ENCODE measurements at regions of chr6 and their contacts with region 1.

Region 1: GRCh38 chr6:155327326-155328073 is 13.2 kb upstream of the TFB1M start:
- DNase-seq: peak in 4 of 10 donors; percentile 24 to 50 (median 42)
- H3K4me3 ChIP-seq: no peak overlapping the region
- H3K27ac ChIP-seq: no peak overlapping the region
- H3K27me3 ChIP-seq: no peaks in the 10 kb centered on the region
- CTCF ChIP-seq: peak; percentile 72 to 97 (median 90)

Region 2: DNA sequence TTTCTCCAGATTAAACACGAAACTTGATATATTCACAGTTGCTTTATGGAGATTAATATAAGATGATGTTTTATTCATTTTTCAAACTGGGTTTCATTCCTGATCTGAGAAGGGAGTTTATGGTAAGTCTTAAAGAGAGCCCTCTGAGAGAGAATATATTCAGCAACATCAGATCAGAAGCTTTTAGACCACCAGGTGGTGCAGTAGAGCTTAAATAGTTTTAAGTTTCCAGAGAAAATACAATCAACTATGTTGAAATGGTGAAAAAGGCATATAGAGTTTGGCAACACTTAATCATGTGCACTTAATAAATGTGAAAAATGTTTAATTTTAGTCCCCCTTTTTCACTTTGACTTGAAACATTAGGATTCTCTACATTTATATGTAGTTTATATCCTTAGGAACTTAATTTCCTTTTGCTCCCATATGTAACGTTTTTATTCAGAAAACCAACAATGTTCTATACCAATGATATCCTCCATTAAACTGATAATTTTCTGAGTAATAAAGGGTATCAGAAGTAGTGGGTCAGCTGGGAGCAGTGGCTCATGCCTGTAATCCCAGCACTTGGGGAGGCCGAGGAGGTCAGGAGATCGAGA is 150.0 kb before region 1 on chr6:
- intact Hi-C with region 1: no loop called
- DNase-seq: peak in 1 of 10 donors; percentile 48
- H3K4me3 ChIP-seq: no peak overlapping the region
- H3K27ac ChIP-seq: no peak overlapping the region
- H3K27me3 ChIP-seq: no peaks in the 10 kb centered on the region
- CTCF ChIP-seq: peak; percentile 63 to 95 (median 82)

Region 3: DNA sequence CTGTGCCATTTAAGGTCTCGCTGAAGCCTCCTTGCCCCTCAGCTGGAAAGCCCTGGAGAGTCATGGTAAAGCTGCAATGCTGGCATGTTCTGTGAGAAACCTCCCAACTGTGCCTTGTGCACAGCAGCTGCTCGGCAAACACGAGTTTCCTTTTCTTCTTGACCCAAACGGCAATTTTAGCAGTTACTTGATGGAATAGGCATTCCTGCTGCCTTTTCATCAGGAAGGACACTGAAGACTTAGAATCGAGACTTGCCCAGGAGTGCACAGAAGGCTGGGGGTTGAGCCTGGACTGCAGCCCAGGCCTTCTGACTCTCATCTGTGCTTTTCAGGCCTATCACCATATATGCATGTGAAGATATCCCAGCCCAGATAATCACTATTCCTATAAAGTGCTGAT is 92.4 kb before region 1 on chr6:
- intact Hi-C with region 1: no loop called
- DNase-seq: no peak
- H3K4me3 ChIP-seq: no peak overlapping the region
- H3K27ac ChIP-seq: peak overlapping the region in 22 of 59 donors; percentile 9 to 67 (median 35)
- H3K27me3 ChIP-seq: no peaks in the 10 kb centered on the region
- CTCF ChIP-seq: no peak

Region 4: GRCh38 chr6:155493694-155494143 is 166.2 kb after region 1 on chr6:
- intact Hi-C with region 1: loop called in 1 of 2 experiments (anchors 10 kb)
- DNase-seq: peak in 2 of 10 donors; percentile 17 to 30
- H3K4me3 ChIP-seq: no peak overlapping the region
- H3K27ac ChIP-seq: no peak overlapping the region
- H3K27me3 ChIP-seq: no peaks in the 10 kb centered on the region
- CTCF ChIP-seq: no peak

Region 5: GRCh38 chr6:155530219-155530834 is 202.8 kb after region 1 on chr6:
- intact Hi-C with region 1: loop called (anchors 2 to 5 kb)
- DNase-seq: no peak
- H3K4me3 ChIP-seq: no peak overlapping the region
- H3K27ac ChIP-seq: no peak overlapping the region
- H3K27me3 ChIP-seq: peaks cover 0 to 2% (median 0%) of the 10 kb centered on the region in 45 donors
- CTCF ChIP-seq: peak; percentile 29 to 76 (median 58)

Region 6: DNA sequence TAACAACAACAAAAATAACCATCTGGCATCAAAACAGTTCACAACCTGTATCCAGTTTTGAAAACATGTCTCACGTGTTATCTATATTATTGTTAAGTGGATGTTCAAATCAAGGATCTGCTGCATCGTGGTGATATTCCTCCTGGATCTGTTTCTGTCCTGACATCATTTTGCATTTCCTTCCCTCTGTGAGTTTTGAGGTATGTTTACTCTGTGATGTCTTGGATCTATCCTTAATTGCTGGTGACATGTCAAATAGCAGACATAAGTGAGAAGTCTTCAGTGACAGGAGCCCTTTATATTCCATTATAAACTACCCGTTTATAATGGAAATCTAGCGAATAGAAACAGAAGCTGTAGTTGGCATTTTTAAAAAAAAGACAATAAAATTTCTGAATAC is 510.0 kb after region 1 on chr6:
- intact Hi-C with region 1: no loop called
- DNase-seq: no peak
- H3K4me3 ChIP-seq: no peak overlapping the region
- H3K27ac ChIP-seq: no peak overlapping the region
- H3K27me3 ChIP-seq: no peaks in the 10 kb centered on the region
- CTCF ChIP-seq: no peak

Measured in dorsolateral prefrontal cortex (tissue), 120 donors.